PC-9 (cell line): ENCODE measurements at regions of chr5 and their contacts with region 1.

Region 1: DNA sequence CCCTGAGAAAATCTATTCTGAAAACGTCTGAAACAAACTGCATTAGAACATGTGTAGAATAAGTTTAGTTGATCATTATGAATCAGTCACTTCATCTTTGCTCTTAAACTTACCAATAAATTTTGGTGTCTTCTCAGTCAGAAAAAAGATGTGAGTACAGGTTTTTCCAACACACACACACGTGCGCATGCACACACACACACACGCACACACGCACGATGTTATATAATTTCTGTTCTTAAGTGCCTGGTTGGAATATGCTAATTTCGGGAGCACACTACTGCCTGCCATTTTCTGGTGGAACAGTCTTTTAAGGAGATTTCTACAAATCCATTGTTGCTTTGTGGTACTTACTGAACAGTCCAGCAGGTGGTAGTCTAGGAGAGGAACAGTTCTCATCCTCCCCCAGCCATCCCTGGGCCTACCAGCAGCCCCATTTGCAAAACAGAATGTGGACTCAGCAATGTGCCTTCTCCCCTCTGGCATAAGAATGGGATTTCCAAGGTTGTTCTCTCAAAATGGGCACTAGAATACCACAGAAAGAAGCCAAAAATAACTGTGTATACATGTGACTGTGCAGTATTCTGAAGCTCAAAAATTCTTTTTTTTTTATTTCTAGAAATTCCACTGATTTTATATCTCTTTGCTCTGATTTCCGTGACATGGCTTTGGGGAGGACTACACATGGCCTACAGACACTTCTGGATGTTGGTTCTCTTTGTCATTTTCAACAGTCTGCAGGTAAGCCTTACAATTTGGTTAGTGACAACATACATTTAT is 281.3 kb downstream of the ARRDC3 start:
- DNase-seq: peak; percentile 54 to 61
- H3K4me3 ChIP-seq: no peak overlapping the region
- H3K27ac ChIP-seq: no peak overlapping the region
- H3K4me1 ChIP-seq: peaks cover 7% of the 10 kb centered on the region; the same call in 1 of the 2 replicates
- H3K27me3 ChIP-seq: no peaks in the 10 kb centered on the region
- CTCF ChIP-seq: peak; percentile 86

Region 2: DNA sequence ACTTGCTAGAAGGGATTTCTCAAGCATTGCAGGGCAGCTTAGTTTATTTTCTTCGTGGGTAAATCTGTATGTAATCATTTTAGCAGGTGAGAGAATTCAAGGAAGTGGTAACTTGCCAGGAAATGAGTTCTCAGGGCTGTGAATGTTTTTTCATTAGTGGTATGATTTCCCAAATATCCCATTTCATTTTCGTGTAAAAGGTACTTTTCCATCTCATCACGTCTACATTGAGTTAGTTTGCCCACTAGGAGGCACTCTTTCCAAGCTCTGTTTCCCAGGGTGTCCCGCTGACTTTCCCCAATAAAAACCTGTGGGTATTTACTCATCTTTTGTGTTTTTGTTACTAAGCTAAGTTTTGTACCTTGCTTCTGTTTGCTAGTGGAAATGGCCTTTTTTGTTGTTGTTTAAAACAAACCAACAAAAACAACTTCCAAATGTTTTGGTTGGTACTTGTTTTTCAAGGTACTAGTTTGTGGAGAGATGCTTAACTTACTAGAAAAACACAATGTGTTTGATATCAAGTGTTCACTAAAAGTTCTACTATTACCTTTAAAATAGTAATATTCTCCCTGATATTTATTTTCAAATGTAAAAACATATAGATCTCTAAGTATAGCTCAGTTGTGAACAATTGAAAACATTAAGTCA is 169.6 kb before region 1 on chr5:
- CTCF ChIA-PET with region 1: no interaction called
- POLR2A ChIA-PET with region 1: no interaction called
- intact Hi-C with region 1: loop called (anchors 1 kb)
- DNase-seq: peak; percentile 34 to 52
- H3K4me3 ChIP-seq: no peak overlapping the region
- H3K27ac ChIP-seq: peak overlapping the region; percentile 45
- H3K4me1 ChIP-seq: peaks cover 8% of the 10 kb centered on the region
- H3K27me3 ChIP-seq: no peaks in the 10 kb centered on the region
- CTCF ChIP-seq: peak; percentile 73

Region 3: GRCh38 chr5:91219803-91220371 is 118.1 kb after region 1 on chr5:
- CTCF ChIA-PET with region 1: no interaction called
- POLR2A ChIA-PET with region 1: no interaction called
- intact Hi-C with region 1: loop called (anchors 2 kb)
- DNase-seq: no peak
- H3K4me3 ChIP-seq: no peak overlapping the region
- H3K27ac ChIP-seq: peak overlapping the region; percentile 62
- H3K4me1 ChIP-seq: peaks cover 23% of the 10 kb centered on the region
- H3K27me3 ChIP-seq: no peaks in the 10 kb centered on the region
- CTCF ChIP-seq: peak; percentile 52

Region 4: GRCh38 chr5:91280362-91281269 is 178.8 kb after region 1 on chr5:
- CTCF ChIA-PET with region 1: no interaction called
- POLR2A ChIA-PET with region 1: no interaction called
- intact Hi-C with region 1: loop called (anchors 1 kb)
- DNase-seq: peak; percentile 94
- H3K4me3 ChIP-seq: peak overlapping the region; percentile 70
- H3K27ac ChIP-seq: peak overlapping the region; percentile 97
- H3K4me1 ChIP-seq: peaks cover 60% of the 10 kb centered on the region
- H3K27me3 ChIP-seq: no peaks in the 10 kb centered on the region
- CTCF ChIP-seq: 0 out of 2 replicates have a peak, but pooled peaks have one; percentile 22

Region 5: GRCh38 chr5:91311697-91312501 is 210.1 kb after region 1 on chr5:
- CTCF ChIA-PET with region 1: no interaction called
- POLR2A ChIA-PET with region 1: no interaction called
- intact Hi-C with region 1: loop called (anchors 5 kb)
- DNase-seq: peak; percentile 78 to 98
- H3K4me3 ChIP-seq: peak overlapping the region; percentile 82
- H3K27ac ChIP-seq: peak overlapping the region; percentile 99
- H3K4me1 ChIP-seq: peaks cover 38% of the 10 kb centered on the region
- H3K27me3 ChIP-seq: no peaks in the 10 kb centered on the region
- CTCF ChIP-seq: no peak; the same call in 1 of the 2 replicates